Panc1 (cell line): ENCODE measurements at regions of chr12 and their contacts with region 1.

Region 1: DNA sequence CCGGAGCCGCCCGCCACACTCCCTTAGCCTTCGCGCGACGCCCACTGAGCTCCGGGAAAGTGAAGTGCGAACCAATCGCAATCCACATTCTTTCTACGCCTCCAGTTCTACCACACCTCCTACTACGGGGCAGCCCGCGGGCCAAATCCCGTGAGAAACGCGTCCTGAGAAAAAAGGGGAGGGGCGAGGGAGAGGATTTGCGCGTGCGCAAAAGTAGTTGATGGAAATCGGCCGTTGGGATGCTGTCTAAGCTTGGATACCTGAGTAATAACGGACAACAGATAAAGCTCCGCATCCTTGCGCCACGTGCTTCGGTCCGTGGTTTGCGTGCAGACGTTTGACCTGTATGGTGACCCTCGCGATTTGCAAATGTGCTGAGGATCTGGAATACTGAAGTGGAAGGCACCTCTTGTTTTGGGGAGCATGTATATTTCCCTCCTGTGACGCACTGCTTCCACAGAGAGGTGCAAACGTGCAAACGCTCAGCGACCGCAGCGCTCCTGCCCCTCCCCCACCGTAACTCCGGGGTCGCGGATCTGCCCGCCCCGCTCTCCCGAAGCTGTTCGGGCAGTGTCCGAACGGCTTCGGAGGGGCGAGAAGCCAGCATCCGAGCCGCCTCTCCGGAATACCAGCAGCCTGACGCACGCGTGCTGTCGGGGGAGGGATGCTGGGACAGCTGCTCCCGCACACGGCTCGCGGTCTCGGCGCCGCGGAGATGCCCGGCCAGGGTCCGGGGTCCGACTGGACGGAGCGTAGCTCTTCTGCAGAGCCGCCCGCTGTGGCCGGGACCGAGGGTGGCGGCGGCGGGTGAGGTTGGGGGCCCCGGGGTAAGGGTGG is at the starts of genes FAM216A and GPN3:
- DNase-seq: peak; percentile 93
- ATAC-seq: peak; percentile 91
- H3K4me3 ChIP-seq: peak within 1 kb of the TSS; percentile 88 to 95
- H3K27ac ChIP-seq: peak within 1 kb of the TSS; percentile 90
- H3K4me1 ChIP-seq: peaks cover 11% of the 10 kb centered on the region
- H3K27me3 ChIP-seq: no peaks in the 10 kb centered on the region
- CTCF ChIP-seq: no peak
- total RNA-seq, gene FAM216A: 22.3 TPM
- total RNA-seq, gene GPN3: 39.0 TPM

Region 2: GRCh38 chr12:110501752-110502738 is 33.6 kb after region 1 on chr12 and contains the starts of genes RAD9B and VPS29:
- CTCF ChIA-PET with region 1: interaction called, 4 read pairs
- POLR2A ChIA-PET with region 1: interaction called, 3 read pairs
- in situ Hi-C with region 1: loop called (anchors 5 kb)
- intact Hi-C with region 1: no loop called
- DNase-seq: peak; percentile 87
- ATAC-seq: peak; percentile 97
- H3K4me3 ChIP-seq: peak within 1 kb of the TSS; percentile 91 to 99
- H3K27ac ChIP-seq: peak within 1 kb of the TSS; percentile 97
- H3K4me1 ChIP-seq: peaks cover 19% of the 10 kb centered on the region
- H3K27me3 ChIP-seq: no peaks in the 10 kb centered on the region
- CTCF ChIP-seq: no peak
- total RNA-seq, gene RAD9B: 0.98 TPM
- total RNA-seq, gene VPS29: 128 TPM

Region 3: GRCh38 chr12:110972866-110973265 is 504.4 kb after region 1 on chr12:
- CTCF ChIA-PET with region 1: no interaction called
- POLR2A ChIA-PET with region 1: no interaction called
- in situ Hi-C with region 1: no loop called
- intact Hi-C with region 1: no loop called
- DNase-seq: no peak
- ATAC-seq: no peak
- H3K4me3 ChIP-seq: no peak overlapping the region
- H3K27ac ChIP-seq: no peak overlapping the region
- H3K4me1 ChIP-seq: no peaks in the 10 kb centered on the region
- H3K27me3 ChIP-seq: no peaks in the 10 kb centered on the region
- CTCF ChIP-seq: no peak